T-cell (primary cell): ENCODE measurements at regions of chr2 and their contacts with region 1.

Region 1: GRCh38 chr2:191691016-191691735 is 13.2 kb downstream of the NABP1 start:
- DNase-seq: peak in 27 of 35 experiments; percentile 2 to 84 (median 40)
- ATAC-seq: peak; percentile 78 to 90 (median 86)
- H3K4me3 ChIP-seq: no peak overlapping the region
- H3K4me3 Mint-ChIP-seq: no peak overlapping the region
- H3K27ac ChIP-seq: no peak overlapping the region
- H3K27ac Mint-ChIP-seq: peak overlapping the region; percentile 71 to 79
- H3K4me1 ChIP-seq: peaks cover 0 to 4% of the 10 kb centered on the region in 2 experiments
- H3K4me1 Mint-ChIP-seq: peaks cover 15 to 36% (median 29%) of the 10 kb centered on the region in 3 donors
- H3K27me3 ChIP-seq: no peaks in the 10 kb centered on the region
- H3K27me3 Mint-ChIP-seq: no peaks in the 10 kb centered on the region

Region 2: DNA sequence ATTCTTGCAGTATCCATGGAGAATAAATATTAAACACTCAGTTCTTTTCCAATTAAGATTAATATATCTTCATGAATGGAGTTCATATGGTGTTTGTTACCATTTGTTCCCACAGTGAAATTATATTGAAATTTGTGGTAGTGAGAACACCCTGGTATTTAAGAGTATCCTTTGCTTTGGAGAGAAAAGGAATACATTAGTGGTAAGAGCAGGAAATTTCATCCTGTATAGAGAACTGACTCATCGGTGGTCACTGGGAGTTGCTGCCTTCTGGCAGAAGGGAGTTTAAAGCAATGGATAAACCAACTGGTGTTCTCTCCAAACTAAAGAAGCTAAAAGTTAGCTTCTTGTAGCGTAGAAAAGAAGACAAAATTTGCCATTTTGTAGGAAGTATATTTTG is 338.6 kb before region 1 on chr2:
- CTCF ChIA-PET with region 1: no interaction called
- POLR2A ChIA-PET with region 1: no interaction called
- DNase-seq: no peak
- ATAC-seq: no peak
- H3K4me3 ChIP-seq: no peak overlapping the region
- H3K4me3 Mint-ChIP-seq: no peak overlapping the region
- H3K27ac ChIP-seq: no peak overlapping the region
- H3K27ac Mint-ChIP-seq: no peak overlapping the region
- H3K4me1 ChIP-seq: peaks cover 0 to 2% of the 10 kb centered on the region in 2 experiments
- H3K4me1 Mint-ChIP-seq: no peaks in the 10 kb centered on the region
- H3K27me3 ChIP-seq: peaks cover 0 to 2% of the 10 kb centered on the region in 2 experiments
- H3K27me3 Mint-ChIP-seq: peaks cover 3 to 10% of the 10 kb centered on the region in 2 donors

Region 3: DNA sequence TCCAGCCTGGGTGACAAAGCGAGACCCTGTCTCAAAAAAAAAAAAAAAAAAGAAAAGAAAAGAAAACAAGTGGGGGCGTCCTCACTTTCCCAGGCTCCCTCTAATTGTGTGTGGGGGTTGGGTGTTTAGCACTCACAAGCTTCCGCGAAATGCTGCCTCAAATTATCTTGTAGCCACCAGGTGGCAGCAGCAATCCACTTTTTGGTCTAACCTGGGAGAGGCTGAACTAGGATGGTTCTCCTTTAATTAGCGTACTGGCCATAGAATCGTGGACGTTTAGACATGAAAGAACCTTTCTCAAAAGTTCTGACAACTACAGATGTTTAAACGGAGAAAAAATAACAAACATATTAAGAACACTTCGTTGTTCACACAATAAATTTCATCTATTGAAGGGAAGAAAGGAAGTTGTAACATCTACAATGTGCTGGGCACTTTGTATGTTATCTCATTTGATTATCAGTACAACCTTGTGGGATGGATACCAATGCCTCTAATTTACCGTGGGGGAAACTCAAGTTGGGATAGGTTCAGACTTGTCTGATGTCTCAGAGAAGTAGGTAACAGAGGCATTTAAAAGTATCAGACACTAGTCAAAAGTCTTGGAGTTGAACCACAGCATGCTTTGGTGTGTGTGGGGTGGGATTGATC is 136.0 kb before region 1 on chr2:
- CTCF ChIA-PET with region 1: interaction called, 7 to 14 read pairs
- POLR2A ChIA-PET with region 1: interaction called in 1 of 2 experiments, 4 read pairs
- DNase-seq: peak; percentile 42 to 87 (median 70)
- ATAC-seq: peak; percentile 63 to 88 (median 74)
- H3K4me3 ChIP-seq: no peak overlapping the region
- H3K4me3 Mint-ChIP-seq: no peak overlapping the region
- H3K27ac ChIP-seq: no peak overlapping the region
- H3K27ac Mint-ChIP-seq: no peak overlapping the region
- H3K4me1 ChIP-seq: no peaks in the 10 kb centered on the region
- H3K4me1 Mint-ChIP-seq: peaks cover 2 to 5% (median 3%) of the 10 kb centered on the region in 3 donors
- H3K27me3 ChIP-seq: peaks cover 0 to 7% of the 10 kb centered on the region in 2 experiments
- H3K27me3 Mint-ChIP-seq: peaks cover 13 to 16% of the 10 kb centered on the region in 2 donors

Region 4: GRCh38 chr2:191566344-191566743 is 124.8 kb before region 1 on chr2:
- CTCF ChIA-PET with region 1: interaction called, 13 to 17 read pairs
- POLR2A ChIA-PET with region 1: no interaction called
- DNase-seq: peak; percentile 7 to 83 (median 55)
- ATAC-seq: peak; percentile 57 to 67 (median 65)
- H3K4me3 ChIP-seq: no peak overlapping the region
- H3K4me3 Mint-ChIP-seq: no peak overlapping the region
- H3K27ac ChIP-seq: no peak overlapping the region
- H3K27ac Mint-ChIP-seq: no peak overlapping the region
- H3K4me1 ChIP-seq: peaks cover 10 to 16% of the 10 kb centered on the region in 2 experiments
- H3K4me1 Mint-ChIP-seq: peaks cover 16 to 28% (median 17%) of the 10 kb centered on the region in 3 donors
- H3K27me3 ChIP-seq: peaks cover 0 to 13% of the 10 kb centered on the region in 2 experiments
- H3K27me3 Mint-ChIP-seq: peaks cover 20 to 25% of the 10 kb centered on the region in 2 donors

Region 5: GRCh38 chr2:192004188-192004963 is 313.2 kb after region 1 on chr2:
- CTCF ChIA-PET with region 1: interaction called in 1 of 2 experiments, 11 read pairs
- POLR2A ChIA-PET with region 1: no interaction called
- DNase-seq: no peak
- ATAC-seq: no peak
- H3K4me3 ChIP-seq: no peak overlapping the region
- H3K4me3 Mint-ChIP-seq: no peak overlapping the region
- H3K27ac ChIP-seq: no peak overlapping the region
- H3K27ac Mint-ChIP-seq: no peak overlapping the region
- H3K4me1 ChIP-seq: no peaks in the 10 kb centered on the region
- H3K4me1 Mint-ChIP-seq: no peaks in the 10 kb centered on the region
- H3K27me3 ChIP-seq: no peaks in the 10 kb centered on the region
- H3K27me3 Mint-ChIP-seq: peaks cover 3 to 14% of the 10 kb centered on the region in 2 donors